Right ventricle myocardium inferior (tissue), 1 donor: ENCODE measurements at regions of chr3 and their contacts with region 1.

Region 1: DNA sequence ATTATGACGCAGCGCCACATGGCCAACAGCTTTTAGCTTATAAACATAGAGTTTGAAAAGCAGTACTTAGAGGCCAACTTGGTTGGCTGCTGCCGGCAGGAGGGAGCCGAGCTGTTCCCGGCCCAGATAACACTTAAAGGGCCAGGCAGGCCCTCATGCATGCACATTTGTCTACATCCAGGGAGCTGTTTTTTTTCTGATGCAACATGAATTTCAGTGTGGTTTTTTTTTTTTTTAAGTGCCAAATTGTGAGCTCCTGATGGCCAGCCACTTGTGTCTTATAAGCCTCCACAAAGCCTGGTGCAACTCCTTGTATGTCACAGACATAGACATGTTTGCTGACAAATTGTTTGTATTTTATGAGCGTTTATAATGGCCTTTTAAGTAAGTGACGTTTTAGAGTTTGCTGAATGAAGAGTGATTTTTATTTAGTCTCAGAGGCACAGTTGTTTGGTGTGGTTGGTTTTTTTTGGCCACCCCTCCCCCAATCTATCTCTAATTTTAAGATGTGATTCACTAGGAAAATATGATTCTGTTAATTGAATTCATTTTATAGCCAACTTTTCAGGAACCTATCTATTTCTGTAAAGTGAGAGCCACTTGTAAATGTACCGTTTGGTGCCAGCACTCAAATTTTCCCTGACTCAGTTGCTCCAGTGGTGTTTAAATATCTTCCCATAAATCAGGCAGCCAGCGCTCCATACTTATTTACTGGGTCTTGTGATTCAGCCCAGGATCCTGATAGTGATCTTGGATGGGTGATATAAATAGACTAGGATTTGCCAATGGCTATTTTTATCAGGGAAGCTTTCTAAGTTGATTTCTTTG is 134.3 kb downstream of the VGLL4 start:
- DNase-seq: peak; percentile 80
- ATAC-seq: peak; percentile 96

Region 2: GRCh38 chr3:11211531-11212298 is 297.7 kb before region 1 on chr3:
- intact Hi-C with region 1: no loop called
- DNase-seq: no peak
- ATAC-seq: no peak

Region 3: DNA sequence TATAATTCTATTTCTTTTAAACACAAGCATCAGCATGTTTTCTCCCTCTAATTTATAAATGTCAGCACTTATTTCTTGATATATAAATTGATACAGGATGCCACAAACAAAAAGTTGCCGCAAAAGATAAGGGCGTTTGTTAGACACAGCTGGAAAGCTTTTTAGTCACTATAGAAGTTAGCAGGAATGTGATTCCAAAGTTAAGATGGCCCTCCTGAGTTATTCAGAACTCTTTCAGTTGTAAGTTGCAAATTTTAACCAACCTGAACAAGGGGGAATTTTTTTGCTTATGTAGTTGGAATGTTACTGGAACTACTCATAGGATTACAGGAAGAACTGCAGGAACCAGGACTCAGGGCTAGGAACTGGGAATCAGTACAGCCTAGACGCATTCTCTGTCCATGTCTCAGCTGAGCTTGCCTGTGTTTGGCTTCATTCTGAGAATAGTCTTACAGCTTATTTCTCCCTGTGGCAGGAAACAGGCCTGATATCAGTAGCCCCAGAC is 31.9 kb before region 1 on chr3:
- intact Hi-C with region 1: loop called (anchors 5 kb)
- DNase-seq: no peak
- ATAC-seq: peak; percentile 29

Region 4: DNA sequence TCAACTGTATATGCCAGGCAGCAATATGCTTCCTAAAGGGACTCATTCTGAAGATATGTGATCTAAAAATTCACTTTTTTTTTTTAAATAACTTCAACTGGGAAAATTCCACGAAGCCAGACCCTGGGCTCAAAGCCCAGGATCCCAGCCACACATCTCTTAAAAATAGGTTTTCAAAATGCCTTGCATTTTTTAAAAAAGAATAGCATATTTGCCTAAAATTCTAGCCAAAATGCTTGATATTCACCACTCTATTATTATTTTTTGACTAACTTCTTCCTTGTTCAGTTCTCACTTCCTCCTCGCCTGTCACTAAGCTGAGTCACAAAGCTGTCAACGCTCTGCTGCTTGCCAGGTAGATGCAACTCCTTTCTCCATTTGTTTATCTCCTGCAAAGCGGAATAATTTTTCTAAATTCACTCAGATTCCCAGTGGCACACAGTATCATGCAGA is 162.3 kb after region 1 on chr3:
- intact Hi-C with region 1: no loop called
- DNase-seq: no peak
- ATAC-seq: peak; percentile 67

Region 5: DNA sequence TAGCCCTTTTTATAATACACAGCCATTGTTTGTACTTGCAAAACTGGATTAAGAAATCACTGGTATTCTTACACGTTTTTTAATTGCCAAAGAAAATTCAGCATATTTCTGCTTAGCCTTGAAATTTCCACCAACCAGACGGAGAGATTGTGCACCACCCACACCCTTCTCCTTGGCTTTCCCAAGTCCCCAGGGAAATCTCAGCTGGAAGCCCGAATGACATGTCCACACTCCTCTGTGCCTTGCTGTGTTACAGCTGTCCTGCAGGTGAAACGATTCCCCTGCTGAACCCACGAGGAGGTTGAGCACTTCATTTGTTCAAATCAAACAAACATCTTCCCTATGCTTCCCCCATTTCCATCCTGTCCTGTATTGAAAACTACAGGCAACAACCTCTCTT is 729.9 kb after region 1 on chr3:
- intact Hi-C with region 1: no loop called
- DNase-seq: no peak
- ATAC-seq: peak; percentile 93